ENCODE measurements at regions of chr19 and their contacts with region 1.

Region 1: GRCh38 chr19:44164673-44165512 is at the start of gene ZNF226:
- DNase-seq: peak; percentile 45 to 93
- ATAC-seq: peak; percentile 84 to 97 (median 93)
- H3K4me3 ChIP-seq: peak within 1 kb of the TSS; percentile 71
- H3K4me3 Mint-ChIP-seq: peak within 1 kb of the TSS; percentile 98
- H3K27ac ChIP-seq: peak within 1 kb of the TSS; percentile 77
- H3K27ac Mint-ChIP-seq: peak within 1 kb of the TSS; percentile 96 to 98
- H3K4me1 ChIP-seq: peaks cover 13% of the 10 kb centered on the region
- H3K4me1 Mint-ChIP-seq: peaks cover 38 to 42% of the 10 kb centered on the region in 2 donors
- H3K27me3 ChIP-seq: no peaks in the 10 kb centered on the region
- H3K27me3 Mint-ChIP-seq: no peaks in the 10 kb centered on the region
- CTCF ChIP-seq: no peak
- total RNA-seq, gene ZNF226: 11.1 to 16.0 (median 15.0) TPM

Region 2: DNA sequence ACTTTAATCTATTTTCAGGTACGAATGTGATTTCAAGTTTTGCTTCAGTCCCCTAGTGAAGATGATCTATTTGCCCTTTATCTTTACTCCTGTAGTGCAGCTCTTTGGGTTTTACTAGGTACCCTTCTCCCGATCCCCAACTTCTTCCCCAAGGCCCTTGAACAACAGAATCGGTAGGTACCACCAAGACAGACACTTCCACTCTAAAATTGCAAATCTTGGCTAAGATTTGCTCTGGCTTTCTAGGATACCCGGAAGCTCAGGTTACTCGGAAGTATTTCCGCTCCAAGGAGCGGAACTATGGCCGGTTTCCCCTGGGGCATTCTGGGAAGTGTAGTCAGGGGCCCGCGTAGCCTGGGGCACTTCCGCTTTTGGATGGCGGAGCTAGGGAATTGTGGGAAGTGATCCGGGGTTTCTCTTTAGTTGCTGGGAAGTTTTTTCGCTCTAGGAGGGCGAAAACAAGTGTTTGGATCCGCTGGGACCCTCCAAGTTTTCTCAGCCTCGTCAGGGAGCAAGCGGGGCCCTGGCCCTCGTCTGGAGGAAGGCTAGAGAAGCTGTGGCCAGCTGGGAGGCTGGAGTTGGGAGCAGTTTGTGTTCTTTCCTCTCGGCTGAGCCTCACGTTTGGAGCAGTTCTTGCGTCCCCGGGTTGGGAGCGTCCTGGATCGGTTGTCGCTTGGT is 42.4 kb after region 1 on chr19:
- intact Hi-C with region 1: loop called (anchors 2 kb)
- DNase-seq: peak; percentile 28 to 90
- ATAC-seq: peak; percentile 77 to 95 (median 84)
- H3K4me3 ChIP-seq: peak overlapping the region; percentile 77
- H3K4me3 Mint-ChIP-seq: peak overlapping the region; percentile 96
- H3K27ac ChIP-seq: peak overlapping the region; percentile 79
- H3K27ac Mint-ChIP-seq: peak overlapping the region; percentile 91 to 96
- H3K4me1 ChIP-seq: peaks cover 12% of the 10 kb centered on the region
- H3K4me1 Mint-ChIP-seq: peaks cover 11 to 13% of the 10 kb centered on the region in 2 donors
- H3K27me3 ChIP-seq: peaks cover 2% of the 10 kb centered on the region
- H3K27me3 Mint-ChIP-seq: peaks cover 15 to 22% of the 10 kb centered on the region in 2 donors
- CTCF ChIP-seq: no peak